PC-9 (cell line): ENCODE measurements at regions of chr2 and their contacts with region 1.

Region 1: DNA sequence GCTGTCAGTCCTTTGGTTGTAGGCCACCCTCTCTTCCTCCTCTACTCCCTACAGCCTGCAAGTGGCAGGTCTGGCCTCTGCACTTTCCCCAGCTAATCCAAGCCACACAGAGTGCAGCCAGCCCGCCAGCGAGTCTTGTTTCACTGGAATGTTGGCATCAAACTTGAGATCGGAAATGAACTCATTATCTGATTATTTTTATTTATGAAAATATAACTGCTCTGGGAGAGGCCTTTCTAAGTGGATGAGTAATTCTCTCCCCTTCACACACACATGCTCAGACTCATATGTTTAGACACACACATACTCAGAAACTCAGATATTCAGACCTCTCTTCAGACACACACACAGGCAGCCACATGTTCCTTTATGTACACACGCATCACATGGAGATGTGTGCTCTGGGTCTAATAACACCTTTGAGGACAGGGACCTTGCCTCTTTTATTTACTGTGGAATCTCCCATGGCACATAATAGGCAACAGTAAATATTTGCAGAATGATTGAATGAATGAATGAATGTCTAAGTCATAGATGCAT is 151.3 kb downstream of the ZFP36L2 start:
- DNase-seq: peak; percentile 89 to 97
- H3K4me3 ChIP-seq: peak overlapping the region; percentile 55
- H3K27ac ChIP-seq: peak overlapping the region; percentile 93
- H3K4me1 ChIP-seq: peaks cover 71% of the 10 kb centered on the region
- H3K27me3 ChIP-seq: no peaks in the 10 kb centered on the region
- CTCF ChIP-seq: no peak

Region 2: DNA sequence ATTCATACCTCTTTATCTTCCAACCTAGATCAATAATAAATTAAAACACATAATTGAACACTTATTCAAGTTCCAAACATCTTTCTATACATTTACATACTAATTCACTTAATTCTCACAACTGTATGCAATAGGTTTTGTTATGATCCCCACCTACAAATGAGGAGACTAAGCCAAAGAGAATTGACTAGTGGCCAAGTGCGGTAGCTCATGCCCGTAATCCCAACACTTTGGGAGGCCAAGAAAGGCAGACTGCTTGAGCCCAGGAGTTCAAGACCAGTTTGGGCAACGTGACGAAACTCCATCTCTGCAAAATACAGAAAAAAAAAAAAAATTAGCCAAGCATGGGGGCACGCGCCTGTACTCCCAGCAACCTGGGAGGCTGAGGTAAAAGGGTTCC is 618.1 kb before region 1 on chr2:
- CTCF ChIA-PET with region 1: no interaction called
- POLR2A ChIA-PET with region 1: no interaction called
- intact Hi-C with region 1: no loop called
- DNase-seq: no peak
- H3K4me3 ChIP-seq: no peak overlapping the region
- H3K27ac ChIP-seq: no peak overlapping the region
- H3K4me1 ChIP-seq: no peaks in the 10 kb centered on the region
- H3K27me3 ChIP-seq: no peaks in the 10 kb centered on the region
- CTCF ChIP-seq: peak; percentile 39; the same call in 1 of the 2 replicates

Region 3: DNA sequence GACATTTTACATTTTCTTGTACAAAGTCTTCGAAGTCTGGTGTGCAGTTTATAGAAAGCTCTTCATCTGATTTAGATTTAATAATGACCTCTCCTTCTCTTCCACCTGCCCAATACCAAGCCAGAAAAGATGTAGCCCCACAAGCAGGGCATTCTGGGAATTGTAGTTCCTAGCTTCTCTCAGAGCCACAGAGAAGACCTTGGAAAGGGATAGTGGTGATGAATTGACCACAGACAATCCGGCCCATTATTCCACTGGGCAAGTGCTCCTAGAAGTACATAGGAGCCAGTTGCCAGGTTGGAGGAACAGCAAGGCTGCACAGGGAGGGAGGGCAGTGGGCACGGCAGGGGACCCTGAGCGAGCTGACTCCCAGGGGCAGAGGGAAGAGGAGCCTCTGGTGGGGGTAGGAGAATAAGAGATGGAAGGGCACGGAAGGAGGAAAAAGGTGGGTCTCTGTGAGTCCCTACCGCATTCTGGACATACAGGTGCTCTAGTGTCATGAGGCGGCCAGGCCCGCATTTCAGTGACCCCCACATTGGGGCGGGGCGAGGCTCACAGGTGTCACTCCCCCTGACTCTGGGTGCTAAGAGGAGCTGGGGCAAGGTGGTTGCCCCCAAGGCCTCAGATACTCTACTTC is 130.2 kb before region 1 on chr2:
- CTCF ChIA-PET with region 1: interaction called, 3 read pairs
- POLR2A ChIA-PET with region 1: interaction called, 3 read pairs
- intact Hi-C with region 1: loop called (anchors 5 kb)
- DNase-seq: no peak
- H3K4me3 ChIP-seq: no peak overlapping the region
- H3K27ac ChIP-seq: no peak overlapping the region
- H3K4me1 ChIP-seq: peaks cover 3% of the 10 kb centered on the region; the same call in 1 of the 2 replicates
- H3K27me3 ChIP-seq: no peaks in the 10 kb centered on the region
- CTCF ChIP-seq: no peak

Region 4: DNA sequence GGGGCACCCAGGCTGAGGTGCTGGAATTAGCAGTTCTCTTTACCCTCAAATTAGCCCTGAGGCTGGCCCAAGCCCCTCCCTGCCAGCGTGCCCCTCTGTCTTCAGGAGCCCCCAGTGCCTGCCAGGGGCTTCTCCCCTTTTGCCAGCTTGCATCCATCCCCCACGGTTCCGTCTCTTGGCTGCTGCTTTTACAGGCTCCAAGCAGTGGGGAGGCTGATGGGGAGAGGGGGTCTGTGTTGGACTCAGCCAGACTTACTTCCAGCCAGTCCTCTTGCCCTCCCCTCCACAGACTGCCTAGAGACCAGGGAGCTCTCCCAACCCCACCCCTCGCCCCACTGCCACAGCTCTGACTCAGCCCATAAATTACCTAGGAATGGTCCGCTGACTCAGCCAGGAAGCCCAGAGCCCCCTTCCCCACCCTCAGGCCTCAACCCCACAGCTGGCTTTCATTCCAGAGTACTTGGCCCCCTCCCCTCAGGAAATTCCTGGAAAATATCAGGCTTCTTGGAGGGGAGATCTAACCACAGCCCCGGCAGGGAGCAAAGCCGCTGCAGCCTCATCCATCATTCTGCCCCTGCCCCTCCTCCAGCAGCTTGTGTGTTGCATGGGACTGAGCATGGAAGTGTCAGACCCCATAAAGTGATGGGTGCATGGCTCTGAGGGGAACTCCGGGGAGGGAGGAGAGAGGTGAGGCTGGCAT is 33.3 kb before region 1 on chr2:
- CTCF ChIA-PET with region 1: interaction called, 9 read pairs
- POLR2A ChIA-PET with region 1: interaction called, 8 read pairs
- intact Hi-C with region 1: loop called (anchors 1 kb)
- DNase-seq: peak; percentile 93 to 95
- H3K4me3 ChIP-seq: peak overlapping the region; percentile 19; the same call in 1 of the 2 replicates
- H3K27ac ChIP-seq: peak overlapping the region; percentile 90
- H3K4me1 ChIP-seq: peaks cover 79% of the 10 kb centered on the region
- H3K27me3 ChIP-seq: no peaks in the 10 kb centered on the region
- CTCF ChIP-seq: no peak

Region 5: GRCh38 chr2:43158259-43158880 is 83.2 kb after region 1 on chr2:
- CTCF ChIA-PET with region 1: no interaction called
- POLR2A ChIA-PET with region 1: interaction called, 7 read pairs
- intact Hi-C with region 1: loop called (anchors 2 kb)
- DNase-seq: peak; percentile 75 to 88
- H3K4me3 ChIP-seq: peak overlapping the region; percentile 22; the same call in 1 of the 2 replicates
- H3K27ac ChIP-seq: peak overlapping the region; percentile 95
- H3K4me1 ChIP-seq: peaks cover 55% of the 10 kb centered on the region
- H3K27me3 ChIP-seq: no peaks in the 10 kb centered on the region
- CTCF ChIP-seq: no peak

Region 6: GRCh38 chr2:43194121-43194869 is 119.2 kb after region 1 on chr2:
- CTCF ChIA-PET with region 1: no interaction called
- POLR2A ChIA-PET with region 1: no interaction called
- intact Hi-C with region 1: no loop called
- DNase-seq: no peak
- H3K4me3 ChIP-seq: no peak overlapping the region
- H3K27ac ChIP-seq: no peak overlapping the region
- H3K4me1 ChIP-seq: peaks cover 28% of the 10 kb centered on the region
- H3K27me3 ChIP-seq: no peaks in the 10 kb centered on the region
- CTCF ChIP-seq: no peak

Region 7: DNA sequence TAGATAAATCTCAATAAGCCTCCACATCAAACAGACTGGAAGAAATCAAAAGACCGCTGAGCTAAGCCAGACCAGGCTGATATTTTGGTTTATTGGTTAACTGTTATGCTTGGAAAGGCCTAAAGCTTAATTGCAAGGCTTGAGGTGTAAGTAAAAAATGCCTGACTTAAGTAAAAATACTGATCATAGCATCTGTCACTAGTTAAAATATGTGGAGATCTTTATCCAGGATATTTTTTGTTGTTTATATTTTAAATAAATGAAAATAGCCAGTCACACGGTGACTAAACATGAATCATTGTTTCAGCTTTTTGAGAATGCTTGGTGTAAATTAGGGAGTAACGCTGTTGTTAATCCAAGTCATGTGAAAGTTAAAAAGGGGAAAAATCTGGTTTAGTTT is 392.8 kb after region 1 on chr2:
- CTCF ChIA-PET with region 1: no interaction called
- POLR2A ChIA-PET with region 1: no interaction called
- intact Hi-C with region 1: loop called (anchors 5 kb)
- DNase-seq: peak in 1 of 2 experiments; percentile 96
- H3K4me3 ChIP-seq: 0 out of 2 replicates have a peak overlapping the region, but pooled peaks have one; percentile 9
- H3K27ac ChIP-seq: peak overlapping the region; percentile 89
- H3K4me1 ChIP-seq: peaks cover 64% of the 10 kb centered on the region
- H3K27me3 ChIP-seq: no peaks in the 10 kb centered on the region
- CTCF ChIP-seq: no peak

Region 8: GRCh38 chr2:43553341-43553855 is 478.3 kb after region 1 on chr2:
- CTCF ChIA-PET with region 1: no interaction called
- POLR2A ChIA-PET with region 1: no interaction called
- intact Hi-C with region 1: no loop called
- DNase-seq: no peak
- H3K4me3 ChIP-seq: no peak overlapping the region
- H3K27ac ChIP-seq: no peak overlapping the region
- H3K4me1 ChIP-seq: no peaks in the 10 kb centered on the region
- H3K27me3 ChIP-seq: no peaks in the 10 kb centered on the region
- CTCF ChIP-seq: no peak

Region 9: DNA sequence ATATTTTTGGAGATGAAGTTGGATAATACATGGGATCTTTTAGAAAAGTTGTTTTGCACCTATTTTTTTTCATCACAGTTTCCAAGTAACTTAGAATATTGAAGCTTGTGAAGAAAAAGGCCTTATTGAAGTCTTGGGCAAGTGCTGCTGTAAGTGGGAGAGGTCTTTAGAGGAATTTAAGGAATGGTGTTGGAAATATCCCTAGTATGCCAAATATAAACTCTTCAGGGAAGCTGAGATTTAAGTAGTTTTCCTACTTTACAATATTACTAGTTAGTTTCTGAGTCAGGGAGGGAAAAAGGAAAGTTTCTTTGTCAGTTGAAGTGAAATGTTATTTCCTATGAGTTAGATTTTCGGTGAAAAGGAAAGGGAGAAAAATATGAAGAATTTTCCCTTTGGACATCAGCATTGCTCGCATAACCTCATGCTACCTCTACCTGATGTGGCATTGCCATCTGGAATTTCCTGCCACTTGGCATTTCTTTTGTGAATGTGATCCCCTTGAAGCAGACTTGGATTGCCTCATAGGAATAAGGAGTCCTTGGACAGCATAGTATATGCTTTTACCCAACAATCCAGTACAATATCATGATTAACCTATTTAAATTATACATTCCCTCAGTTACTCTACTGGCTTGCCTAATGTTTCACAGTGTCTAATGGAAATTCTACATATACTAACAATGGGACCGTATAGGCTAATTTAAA is 574.0 kb after region 1 on chr2:
- CTCF ChIA-PET with region 1: no interaction called
- POLR2A ChIA-PET with region 1: no interaction called
- intact Hi-C with region 1: no loop called
- DNase-seq: no peak
- H3K4me3 ChIP-seq: no peak overlapping the region
- H3K27ac ChIP-seq: no peak overlapping the region
- H3K4me1 ChIP-seq: no peaks in the 10 kb centered on the region
- H3K27me3 ChIP-seq: no peaks in the 10 kb centered on the region
- CTCF ChIP-seq: no peak